ENCODE measurements at regions of chr2 and their contacts with region 1.

Region 1: GRCh38 chr2:127707890-127708648 is 6.8 kb downstream of the SFT2D3 start:
- DNase-seq: no peak
- H3K4me3 ChIP-seq: no peak overlapping the region
- H3K27ac ChIP-seq: no peak overlapping the region
- H3K4me1 ChIP-seq: peaks cover 5% of the 10 kb centered on the region
- H3K27me3 ChIP-seq: no peaks in the 10 kb centered on the region
- CTCF ChIP-seq: no peak

Region 2: GRCh38 chr2:127379712-127380355 is 328.2 kb before region 1 on chr2:
- CTCF ChIA-PET with region 1: interaction called, 11 read pairs
- POLR2A ChIA-PET with region 1: no interaction called
- intact Hi-C with region 1: no loop called
- DNase-seq: no peak
- H3K4me3 ChIP-seq: no peak overlapping the region
- H3K27ac ChIP-seq: no peak overlapping the region
- H3K4me1 ChIP-seq: peaks cover 21% of the 10 kb centered on the region
- H3K27me3 ChIP-seq: no peaks in the 10 kb centered on the region
- CTCF ChIP-seq: no peak